T-cell (primary cell): ENCODE measurements at regions of chr4 and their contacts with region 1.

Region 1: DNA sequence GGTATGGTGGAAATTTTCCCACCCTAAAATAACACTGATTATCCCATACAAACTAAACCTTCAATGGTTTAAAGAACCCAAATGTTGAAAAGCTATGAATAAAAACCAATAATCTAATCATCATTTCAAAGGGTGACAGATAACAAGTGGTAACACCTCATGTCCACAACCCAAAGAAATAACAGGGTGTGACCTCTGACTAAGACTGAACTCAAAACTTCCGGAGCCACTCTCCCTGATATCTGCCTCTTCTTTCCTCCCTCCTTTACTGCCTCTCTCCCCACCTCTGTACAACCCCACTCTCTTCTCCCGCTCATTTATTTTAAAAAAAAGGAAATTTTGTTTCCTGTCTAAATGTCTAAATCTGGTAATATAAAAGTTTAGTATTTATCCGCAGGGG is 11.5 kb downstream of the FBXW7 start:
- DNase-seq: peak in 1 of 35 experiments; percentile 33
- ATAC-seq: peak in 3 of 4 experiments; percentile 30 to 75 (median 38)
- H3K4me3 ChIP-seq: no peak overlapping the region
- H3K4me3 Mint-ChIP-seq: peak overlapping the region; percentile 7 to 40 (median 15)
- H3K27ac ChIP-seq: no peak overlapping the region
- H3K27ac Mint-ChIP-seq: peak overlapping the region; percentile 81
- H3K4me1 ChIP-seq: peaks cover 6% of the 10 kb centered on the region in 2 experiments
- H3K4me1 Mint-ChIP-seq: peaks cover 74 to 77% (median 76%) of the 10 kb centered on the region in 3 donors
- H3K27me3 ChIP-seq: no peaks in the 10 kb centered on the region
- H3K27me3 Mint-ChIP-seq: no peaks in the 10 kb centered on the region

Region 2: GRCh38 chr4:151792995-151793394 is 731.4 kb before region 1 on chr4:
- CTCF ChIA-PET with region 1: no interaction called
- POLR2A ChIA-PET with region 1: interaction called, 7 to 10 read pairs
- DNase-seq: no peak
- ATAC-seq: no peak
- H3K4me3 ChIP-seq: no peak overlapping the region
- H3K4me3 Mint-ChIP-seq: no peak overlapping the region
- H3K27ac ChIP-seq: no peak overlapping the region
- H3K27ac Mint-ChIP-seq: no peak overlapping the region
- H3K4me1 ChIP-seq: no peaks in the 10 kb centered on the region
- H3K4me1 Mint-ChIP-seq: no peaks in the 10 kb centered on the region
- H3K27me3 ChIP-seq: peaks cover 0 to 2% of the 10 kb centered on the region in 2 experiments
- H3K27me3 Mint-ChIP-seq: peaks cover 0 to 5% of the 10 kb centered on the region in 2 donors